ENCODE measurements at regions of chr15 and their contacts with region 1.

Region 1: DNA sequence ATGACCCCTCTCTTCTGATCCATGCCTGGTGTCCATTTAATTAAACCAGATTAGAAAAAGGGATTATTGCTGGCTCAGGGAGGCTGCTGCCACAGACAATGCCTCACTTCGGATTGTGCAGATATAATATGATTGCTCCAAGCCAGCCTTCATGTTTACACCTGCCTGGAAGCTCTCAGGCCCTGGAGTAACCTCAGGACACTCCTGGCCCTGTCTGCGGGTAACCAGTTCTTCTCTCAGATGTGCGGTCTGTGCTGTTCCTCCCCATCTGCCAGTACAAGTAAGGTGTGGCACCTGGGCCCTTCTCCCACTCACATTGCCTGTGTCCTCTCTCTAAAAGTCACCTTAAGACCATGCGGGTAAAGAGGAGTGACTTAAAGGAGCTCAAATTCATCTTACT is 8.8 kb upstream of the GOLGA8J start:
- H3K4me3 ChIP-seq: no peak overlapping the region
- H3K27ac ChIP-seq: no peak overlapping the region
- H3K4me1 ChIP-seq: no peaks in the 10 kb centered on the region
- CTCF ChIP-seq: no peak

Region 2: GRCh38 chr15:29668120-29668602 is 405.8 kb before region 1 on chr15:
- CTCF ChIA-PET with region 1: interaction called, 11 read pairs
- POLR2A ChIA-PET with region 1: no interaction called
- H3K4me3 ChIP-seq: no peak overlapping the region
- H3K27ac ChIP-seq: no peak overlapping the region
- H3K4me1 ChIP-seq: no peaks in the 10 kb centered on the region
- CTCF ChIP-seq: peak; percentile 67

Region 3: DNA sequence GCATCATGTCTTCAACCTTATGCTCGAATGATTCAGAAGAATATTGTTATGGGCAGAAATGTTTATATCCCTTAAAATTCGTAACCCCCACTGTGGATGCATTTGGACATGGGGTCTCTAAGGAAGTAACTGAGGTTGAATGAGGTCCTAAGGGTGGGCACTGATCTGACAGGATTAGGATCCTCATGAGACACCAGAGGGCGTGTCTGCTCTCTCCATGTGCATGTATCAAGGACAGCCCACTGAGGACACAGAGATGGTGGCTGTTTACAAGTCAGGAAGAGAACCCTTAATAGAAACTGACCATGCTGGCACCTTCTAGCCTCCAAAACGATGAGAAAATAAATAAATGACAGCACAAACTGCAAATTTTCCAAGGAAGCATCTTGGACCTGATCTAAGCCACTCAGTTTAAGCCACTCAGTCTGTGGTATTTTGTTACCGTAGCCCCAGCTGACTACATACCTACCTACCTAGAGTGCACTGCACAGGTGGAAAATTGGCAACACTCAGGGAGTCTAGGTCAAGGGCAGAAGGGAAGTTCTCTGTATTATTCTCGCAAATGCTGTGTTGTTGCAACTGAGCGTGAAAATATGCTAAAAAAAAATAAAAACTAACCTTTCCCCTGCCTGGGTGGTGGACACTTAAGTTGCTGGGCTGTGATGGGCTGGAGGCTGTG is 378.3 kb before region 1 on chr15:
- CTCF ChIA-PET with region 1: interaction called, 11 read pairs
- POLR2A ChIA-PET with region 1: no interaction called
- H3K4me3 ChIP-seq: no peak overlapping the region
- H3K27ac ChIP-seq: no peak overlapping the region
- H3K4me1 ChIP-seq: no peaks in the 10 kb centered on the region
- CTCF ChIP-seq: 0 out of 2 replicates have a peak, but pooled peaks have one; percentile 10

Region 4: GRCh38 chr15:30059771-30060170 is 14.1 kb before region 1 on chr15:
- CTCF ChIA-PET with region 1: interaction called, 11 read pairs
- POLR2A ChIA-PET with region 1: no interaction called
- H3K4me3 ChIP-seq: no peak overlapping the region
- H3K27ac ChIP-seq: no peak overlapping the region
- H3K4me1 ChIP-seq: no peaks in the 10 kb centered on the region
- CTCF ChIP-seq: no peak

Measured in HEK293 (cell line).